ENCODE measurements at regions of chr19 and their contacts with region 1.

Region 1: GRCh38 chr19:10936661-10937084 is 8.1 kb downstream of the TIMM29 start:
- DNase-seq: peak; percentile 85
- H3K4me3 Mint-ChIP-seq: no peak overlapping the region
- H3K27ac Mint-ChIP-seq: peak overlapping the region; percentile 20
- H3K4me1 Mint-ChIP-seq: peaks cover 4% of the 10 kb centered on the region
- H3K27me3 Mint-ChIP-seq: no peaks in the 10 kb centered on the region

Region 2: DNA sequence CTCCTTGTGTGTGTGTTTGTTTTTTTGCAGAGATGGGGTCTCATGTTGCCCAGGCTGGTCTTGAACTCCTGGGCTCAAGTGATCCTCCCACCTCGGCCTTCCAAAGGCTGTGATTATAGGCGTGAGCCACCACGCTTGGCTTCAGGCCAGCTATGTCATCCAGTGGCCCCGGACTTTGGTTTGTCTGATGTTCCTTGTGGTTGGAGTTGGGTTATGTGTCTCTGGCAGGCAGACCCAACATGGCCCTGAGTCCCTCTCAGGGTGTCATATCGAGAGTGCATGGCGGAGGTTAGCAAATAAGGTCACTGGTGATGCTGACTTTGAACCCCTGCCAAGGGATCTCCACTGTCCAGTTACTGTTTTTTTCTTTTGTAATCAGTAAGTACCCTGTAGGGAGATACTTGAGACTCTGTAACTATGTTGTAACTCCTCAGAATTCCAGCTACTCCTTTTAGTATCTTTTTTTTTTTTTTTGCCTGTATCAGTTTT is 61.4 kb after region 1 on chr19:
- intact Hi-C with region 1: loop called (anchors 5 kb)
- DNase-seq: no peak
- H3K4me3 Mint-ChIP-seq: no peak overlapping the region
- H3K27ac Mint-ChIP-seq: no peak overlapping the region
- H3K4me1 Mint-ChIP-seq: no peaks in the 10 kb centered on the region
- H3K27me3 Mint-ChIP-seq: no peaks in the 10 kb centered on the region